ENCODE measurements at regions of chr5 and their contacts with region 1.

Region 1: DNA sequence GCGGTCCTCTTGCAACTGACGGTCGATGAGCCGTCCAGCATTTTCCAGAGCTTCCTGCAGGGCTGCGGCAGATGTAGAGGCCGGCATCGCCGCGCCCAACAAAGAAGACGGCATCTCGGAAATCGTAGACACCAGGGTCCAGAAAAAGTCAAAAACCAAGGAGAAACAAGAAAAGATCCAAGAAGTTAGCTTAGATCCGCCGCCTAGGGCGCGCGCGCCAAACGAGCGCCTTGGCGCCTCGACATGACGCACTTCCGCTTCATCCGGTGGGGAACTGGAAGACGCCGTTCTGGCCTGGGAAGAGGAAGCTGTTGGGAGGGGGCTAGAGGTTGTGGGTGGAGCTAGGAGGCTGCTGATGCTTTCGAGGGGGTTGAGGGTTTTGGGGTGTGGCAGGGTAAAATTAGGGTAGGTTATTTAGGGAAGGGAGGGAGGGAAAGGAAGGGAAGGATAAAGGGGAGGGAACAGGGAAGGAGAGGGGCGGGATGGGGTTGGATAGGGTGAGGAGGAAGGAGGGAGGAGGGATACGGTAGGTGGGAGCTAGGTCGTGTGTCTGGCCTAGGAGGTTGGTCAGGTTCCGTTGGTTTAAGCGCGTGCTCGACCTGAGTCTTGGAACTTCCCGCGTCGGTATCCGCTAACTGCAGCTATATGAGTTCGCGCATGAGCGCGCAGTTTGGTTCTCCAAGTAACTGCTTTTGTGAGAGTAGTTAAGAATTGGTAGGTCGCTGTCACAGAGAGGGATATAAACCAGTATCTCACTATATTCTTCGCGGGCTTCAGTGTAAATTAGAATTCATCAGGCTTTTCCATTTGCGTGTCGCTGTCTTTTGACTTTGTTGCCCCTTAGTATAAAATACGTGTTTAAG is at the start of gene NUP155:
- H3K4me3 Mint-ChIP-seq: peak within 1 kb of the TSS; percentile 100
- H3K27ac Mint-ChIP-seq: peak within 1 kb of the TSS; percentile 95
- H3K4me1 Mint-ChIP-seq: peaks cover 27% of the 10 kb centered on the region
- H3K27me3 Mint-ChIP-seq: no peaks in the 10 kb centered on the region

Region 2: DNA sequence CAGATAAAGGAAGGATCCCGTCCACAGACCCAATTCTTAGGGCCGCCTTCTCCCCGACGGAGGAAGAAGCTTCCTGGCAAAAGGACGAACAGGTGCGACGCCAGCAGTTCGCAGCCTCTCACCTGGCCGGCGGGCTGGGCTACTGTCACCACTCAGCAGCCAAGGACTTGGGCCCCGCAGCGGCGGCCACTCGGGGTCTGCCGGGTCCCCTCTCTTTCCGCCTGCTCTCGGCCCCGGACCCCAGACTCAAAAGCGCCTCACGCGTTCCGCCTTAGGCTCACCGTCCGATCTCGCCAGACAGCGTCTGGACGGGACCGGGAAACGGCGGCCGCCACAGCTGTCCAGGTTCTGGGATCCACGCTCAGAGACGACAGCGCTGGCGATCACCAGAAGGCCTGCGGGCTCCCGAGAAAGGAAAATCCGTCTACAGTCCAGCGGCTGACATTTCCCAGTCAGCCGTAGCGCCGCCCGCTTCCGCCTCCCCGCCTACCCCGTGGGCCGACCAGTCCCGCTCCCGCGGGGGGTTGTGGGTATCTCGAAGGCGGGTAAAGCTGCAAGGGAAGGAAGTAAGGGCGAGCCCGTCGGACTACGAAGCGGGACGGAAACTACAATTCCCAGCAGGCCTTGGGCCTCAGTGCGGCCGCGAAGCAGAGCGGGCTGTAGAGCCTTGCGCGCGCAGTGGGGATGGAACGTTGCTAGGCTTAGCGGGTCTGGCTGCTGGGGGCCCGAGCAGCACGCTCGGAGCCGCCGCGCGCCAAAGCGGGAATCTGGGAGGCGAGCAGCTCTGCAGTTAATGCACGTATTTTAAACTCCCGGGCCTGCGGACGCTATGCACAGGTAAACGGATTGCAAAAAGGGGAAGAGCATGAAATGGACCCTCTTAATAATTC is 1219.4 kb before region 1 on chr5 and contains the starts of genes LMBRD2 and SKP2:
- intact Hi-C with region 1: loop called (anchors 5 kb)
- H3K4me3 Mint-ChIP-seq: peak within 1 kb of the TSS; percentile 94
- H3K27ac Mint-ChIP-seq: peak within 1 kb of the TSS; percentile 90
- H3K4me1 Mint-ChIP-seq: peaks cover 58% of the 10 kb centered on the region
- H3K27me3 Mint-ChIP-seq: no peaks in the 10 kb centered on the region

Region 3: GRCh38 chr5:36728697-36729543 is 642.2 kb before region 1 on chr5:
- intact Hi-C with region 1: loop called (anchors 10 kb)
- H3K4me3 Mint-ChIP-seq: no peak overlapping the region
- H3K27ac Mint-ChIP-seq: no peak overlapping the region
- H3K4me1 Mint-ChIP-seq: peaks cover 19% of the 10 kb centered on the region
- H3K27me3 Mint-ChIP-seq: no peaks in the 10 kb centered on the region

Region 4: DNA sequence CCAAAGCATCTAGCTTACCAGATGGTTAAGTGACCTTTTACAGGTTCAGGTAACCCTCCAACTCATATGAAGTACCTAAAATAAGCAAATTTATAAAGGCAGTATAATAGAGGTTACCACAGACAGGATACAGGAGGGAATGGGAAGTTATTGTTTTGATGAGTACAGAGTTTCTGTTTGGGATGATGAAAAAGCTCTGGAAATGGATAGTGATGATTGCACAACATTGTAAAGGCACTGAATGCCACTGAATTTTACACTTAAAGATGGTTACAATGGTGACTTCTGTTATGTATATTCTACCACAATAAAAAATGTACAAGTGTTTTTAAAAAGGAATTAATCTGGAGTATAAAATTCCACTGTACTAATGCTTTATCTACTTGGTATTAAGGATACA is 569.6 kb before region 1 on chr5:
- intact Hi-C with region 1: no loop called
- H3K4me3 Mint-ChIP-seq: no peak overlapping the region
- H3K27ac Mint-ChIP-seq: no peak overlapping the region
- H3K4me1 Mint-ChIP-seq: peaks cover 7% of the 10 kb centered on the region
- H3K27me3 Mint-ChIP-seq: peaks cover 7% of the 10 kb centered on the region

Region 5: DNA sequence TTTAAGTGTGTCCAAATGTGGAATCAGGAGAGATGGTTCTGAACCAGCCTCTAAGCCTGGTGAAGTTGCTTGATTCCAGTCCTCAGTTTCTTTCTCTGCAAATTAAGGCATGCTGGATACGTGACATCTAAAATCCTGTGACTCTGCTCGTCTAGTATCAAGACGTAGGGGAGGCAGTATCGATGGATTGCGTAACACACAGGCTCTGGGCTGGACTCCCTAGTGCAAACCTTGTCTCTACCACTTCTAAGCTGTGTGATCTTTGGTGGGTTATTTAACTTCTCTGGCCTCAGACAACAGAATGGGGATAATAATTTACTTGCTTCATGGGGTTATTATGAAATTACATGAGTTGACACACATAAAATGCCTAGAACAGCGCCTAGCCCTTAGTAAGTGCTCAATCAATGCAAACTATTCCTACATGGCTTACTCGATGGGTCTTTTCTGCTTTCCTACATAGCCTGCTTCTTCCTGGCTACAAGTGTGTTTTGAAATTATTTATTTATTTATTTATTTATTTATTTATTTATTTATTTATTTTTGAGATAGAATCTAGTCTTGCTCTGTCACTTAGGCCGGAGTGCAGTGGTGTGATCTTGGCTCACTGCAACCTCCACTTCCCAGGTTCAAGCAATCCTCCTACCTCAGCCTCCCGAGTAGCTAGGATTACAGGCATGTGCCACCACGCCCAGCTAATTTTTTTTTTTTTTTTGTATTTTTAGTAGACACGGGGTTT is 989.4 kb after region 1 on chr5:
- intact Hi-C with region 1: no loop called
- H3K4me3 Mint-ChIP-seq: no peak overlapping the region
- H3K27ac Mint-ChIP-seq: no peak overlapping the region
- H3K4me1 Mint-ChIP-seq: no peaks in the 10 kb centered on the region
- H3K27me3 Mint-ChIP-seq: no peaks in the 10 kb centered on the region

Region 6: GRCh38 chr5:39264528-39264927 is 1893.4 kb after region 1 on chr5:
- intact Hi-C with region 1: loop called (anchors 10 kb)
- H3K4me3 Mint-ChIP-seq: no peak overlapping the region
- H3K27ac Mint-ChIP-seq: peak overlapping the region; percentile 15
- H3K4me1 Mint-ChIP-seq: peaks cover 73% of the 10 kb centered on the region
- H3K27me3 Mint-ChIP-seq: no peaks in the 10 kb centered on the region

Measured in dendritic cell treated with granulocyte-macrophage colony-stimulating factor and Interleukin-4, amounts not matched to agents 40 ng/mL and 50 ng/mL, for 4 days (primary cell).